Esophagus muscularis mucosa (tissue), 4 donors: ENCODE measurements at regions of chr1 and their contacts with region 1.

Region 1: GRCh38 chr1:169106095-169106920 is at the start of gene ATP1B1:
- DNase-seq: no peak
- H3K4me3 ChIP-seq: peak within 1 kb of the TSS; percentile 68 to 98 (median 93)
- H3K27ac ChIP-seq: peak within 1 kb of the TSS; percentile 90 to 98 (median 96)
- H3K4me1 ChIP-seq: peaks cover 38 to 70% (median 66%) of the 10 kb centered on the region in 4 donors
- H3K27me3 ChIP-seq: no peaks in the 10 kb centered on the region
- CTCF ChIP-seq: peak; percentile 69 to 73 (median 72)
- EP300 ChIP-seq: no peak
- POLR2A ChIP-seq: peak; percentile 88
- total RNA-seq, gene ATP1B1: 69.4 to 88.6 (median 78.3) TPM

Region 2: DNA sequence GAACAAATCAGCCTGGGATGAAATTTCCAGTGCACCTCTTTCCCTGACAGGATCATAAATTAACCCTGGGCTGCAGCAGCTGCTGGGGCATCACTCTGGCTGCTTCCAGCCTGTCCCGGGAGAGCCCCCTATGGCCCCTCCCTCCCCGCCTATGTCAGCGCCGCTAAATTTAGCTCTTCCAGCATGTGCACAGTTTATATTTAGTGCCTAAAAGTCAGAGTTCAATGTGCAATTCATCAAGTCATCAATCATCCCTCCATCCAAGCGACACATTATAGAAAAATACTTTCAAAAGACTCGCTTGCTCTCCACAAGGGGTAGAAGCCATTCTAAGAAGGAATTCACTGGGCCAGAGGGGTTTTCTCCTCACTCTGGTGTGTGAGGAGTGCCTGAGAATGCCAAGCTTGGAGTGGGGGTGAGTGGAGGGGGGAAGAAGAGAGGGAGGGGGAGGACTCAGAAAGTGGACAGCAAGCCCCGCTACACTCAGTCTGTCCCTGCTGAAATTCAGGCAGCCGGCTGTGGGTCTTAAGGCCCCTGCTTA is 492.5 kb before region 1 on chr1:
- intact Hi-C with region 1: loop called (anchors 5 kb)
- DNase-seq: peak; percentile 86
- H3K4me3 ChIP-seq: no peak overlapping the region
- H3K27ac ChIP-seq: peak overlapping the region; percentile 42 to 70 (median 66)
- H3K4me1 ChIP-seq: peaks cover 28 to 44% (median 42%) of the 10 kb centered on the region in 4 donors
- H3K27me3 ChIP-seq: no peaks in the 10 kb centered on the region
- CTCF ChIP-seq: no peak
- EP300 ChIP-seq: peak; percentile 13
- POLR2A ChIP-seq: no peak

Region 3: DNA sequence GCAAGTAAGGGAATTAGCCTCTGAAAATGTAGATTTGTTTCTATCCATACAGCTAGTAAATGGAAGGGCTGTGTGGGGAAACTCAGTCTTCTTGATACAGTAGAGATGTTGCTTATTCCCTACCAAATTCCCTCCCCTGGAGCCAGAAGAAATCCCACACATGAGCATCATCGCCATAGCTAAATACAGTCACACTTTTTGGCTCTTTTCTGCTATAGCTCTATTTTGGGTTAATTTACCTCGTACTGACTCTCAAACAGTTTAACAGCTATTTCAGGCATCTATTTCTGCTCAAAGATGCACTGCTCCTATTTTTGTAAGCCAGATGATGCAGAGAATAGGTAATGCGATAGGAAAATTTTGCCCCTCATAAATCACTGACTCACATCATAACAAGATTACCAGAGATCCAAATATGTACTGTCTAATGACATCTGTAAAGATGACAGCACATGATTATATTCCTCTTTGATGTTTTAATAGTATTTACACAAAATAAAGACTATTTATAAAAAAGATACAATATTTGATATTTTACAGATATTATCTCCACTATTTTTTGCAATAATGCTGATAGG is 471.3 kb before region 1 on chr1:
- intact Hi-C with region 1: loop called (anchors 5 kb)
- DNase-seq: no peak
- H3K4me3 ChIP-seq: no peak overlapping the region
- H3K27ac ChIP-seq: peak overlapping the region; percentile 72 to 77 (median 74)
- H3K4me1 ChIP-seq: peaks cover 0 to 34% (median 26%) of the 10 kb centered on the region in 4 donors
- H3K27me3 ChIP-seq: no peaks in the 10 kb centered on the region
- CTCF ChIP-seq: no peak
- EP300 ChIP-seq: no peak
- POLR2A ChIP-seq: no peak

Region 4: DNA sequence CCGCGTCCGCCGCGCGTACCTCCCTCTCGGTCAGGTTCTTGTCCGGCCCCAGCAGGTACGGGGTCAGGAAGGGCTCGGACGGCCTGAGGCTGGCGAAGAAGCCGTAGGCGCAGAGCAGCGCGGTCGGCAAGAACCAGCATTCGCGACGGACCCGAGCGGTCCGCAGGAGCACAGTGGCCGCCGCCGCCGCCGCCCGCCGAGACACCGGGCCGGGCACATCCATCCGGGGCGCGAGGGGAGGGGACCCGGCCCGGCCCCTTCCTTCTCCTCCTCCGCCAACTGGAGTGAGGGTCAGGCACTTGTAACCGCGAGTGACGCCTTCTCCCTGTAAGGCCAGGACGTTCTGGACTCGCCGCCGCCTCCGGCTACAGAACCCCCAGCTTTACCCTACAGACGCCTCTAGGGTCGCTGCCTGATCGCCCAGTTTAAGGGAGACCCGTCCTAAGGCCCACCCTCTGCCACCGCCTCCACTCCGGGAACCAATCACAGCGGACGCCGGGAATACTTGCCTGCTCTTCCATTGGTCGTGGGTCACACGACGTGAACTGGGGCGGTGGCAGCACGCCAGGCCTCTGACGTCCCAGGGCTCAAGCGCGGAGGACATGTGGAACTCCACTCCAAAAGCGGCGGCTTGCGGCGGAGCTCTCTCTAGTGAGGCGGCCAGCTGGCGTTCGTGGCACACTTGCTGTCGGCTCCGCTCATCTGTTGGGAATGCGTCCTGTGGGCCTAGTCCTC is 379.4 kb after region 1 on chr1 and contains the start of gene SLC19A2:
- intact Hi-C with region 1: loop called (anchors 10 kb)
- DNase-seq: peak; percentile 100
- H3K4me3 ChIP-seq: peak within 1 kb of the TSS; percentile 77 to 85 (median 80)
- H3K27ac ChIP-seq: peak within 1 kb of the TSS; percentile 96 to 99 (median 98)
- H3K4me1 ChIP-seq: peaks cover 9 to 52% (median 49%) of the 10 kb centered on the region in 4 donors
- H3K27me3 ChIP-seq: no peaks in the 10 kb centered on the region
- CTCF ChIP-seq: peak; percentile 41 to 47 (median 43)
- EP300 ChIP-seq: peak; percentile 99
- POLR2A ChIP-seq: peak; percentile 91
- total RNA-seq, gene SLC19A2: 19.0 to 38.8 (median 20.6) TPM